Left ventricle myocardium inferior (tissue), 1 donor: ENCODE measurements at regions of chr12 and their contacts with region 1.

Region 1: DNA sequence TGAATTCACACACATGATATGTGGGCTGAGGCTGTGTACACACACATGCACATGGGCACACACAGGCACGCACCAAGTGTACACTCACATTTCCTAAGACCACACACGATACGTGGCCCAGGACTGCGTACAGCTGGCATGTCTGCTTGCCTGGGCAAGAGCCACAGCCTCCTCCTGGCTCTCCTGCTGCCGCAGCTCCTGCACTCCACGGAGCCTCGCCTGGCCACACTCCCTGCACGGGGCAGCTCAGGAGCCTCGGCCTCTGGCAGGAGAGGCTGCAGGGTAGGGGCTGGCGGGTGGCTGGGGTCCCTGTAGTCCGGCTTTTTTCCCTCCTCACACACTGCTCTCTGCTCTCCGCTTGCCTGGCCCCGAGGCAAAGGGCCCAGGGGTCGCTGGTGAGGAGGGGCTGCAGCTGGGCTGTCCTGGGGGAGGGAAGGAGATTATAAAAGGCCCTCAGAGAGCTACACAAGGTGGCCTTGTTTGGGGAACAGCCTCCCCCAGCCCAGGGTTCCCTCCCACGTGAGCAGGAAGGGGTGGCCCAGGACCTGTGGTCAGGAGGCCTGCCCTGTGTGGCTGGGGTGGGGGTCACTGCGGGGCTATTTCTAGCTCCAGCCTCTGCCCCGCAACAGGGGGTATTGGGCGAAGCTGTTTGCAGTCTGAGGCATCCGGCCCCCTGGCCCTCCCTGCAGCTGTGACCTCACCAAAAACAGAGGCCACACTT is 89.0 kb upstream of the SFSWAP start:
- DNase-seq: no peak
- H3K4me3 ChIP-seq: no peak overlapping the region
- H3K27ac ChIP-seq: no peak overlapping the region
- H3K4me1 ChIP-seq: peaks cover 14% of the 10 kb centered on the region
- H3K27me3 ChIP-seq: peaks cover 84% of the 10 kb centered on the region
- CTCF ChIP-seq: no peak

Region 2: DNA sequence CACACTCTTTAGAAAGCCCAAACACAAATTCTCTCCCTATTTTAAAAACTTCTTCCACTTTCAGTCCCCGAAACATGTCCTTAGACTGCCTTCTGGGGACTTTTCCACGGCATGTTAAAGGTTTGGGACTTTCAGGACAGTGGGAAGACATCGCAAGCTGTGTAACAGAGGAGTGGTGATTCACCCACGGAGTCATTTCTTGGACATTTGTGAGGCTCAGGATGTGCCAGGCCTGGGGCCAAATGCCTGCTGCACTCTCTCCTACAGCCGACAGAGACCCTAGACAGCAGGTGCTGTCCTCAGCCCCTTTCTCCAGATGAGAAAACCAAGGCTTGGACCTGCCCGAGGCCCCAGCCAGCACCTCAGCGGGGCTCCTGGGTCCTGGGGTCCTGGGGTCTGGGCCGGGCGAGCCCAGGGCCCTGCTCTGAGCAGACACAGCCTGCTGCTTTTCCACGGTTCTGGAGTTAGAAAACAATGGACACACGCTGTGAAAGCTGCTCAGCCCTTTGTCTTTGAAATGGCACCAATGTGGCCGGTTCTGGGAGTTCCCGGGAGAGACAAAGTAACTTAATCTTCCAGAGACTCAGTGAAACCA is 281.1 kb before region 1 on chr12:
- intact Hi-C with region 1: loop called (anchors 5 kb)
- DNase-seq: no peak
- H3K4me3 ChIP-seq: no peak overlapping the region
- H3K27ac ChIP-seq: no peak overlapping the region
- H3K4me1 ChIP-seq: no peaks in the 10 kb centered on the region
- H3K27me3 ChIP-seq: peaks cover 7% of the 10 kb centered on the region
- CTCF ChIP-seq: no peak

Region 3: GRCh38 chr12:131390384-131391334 is 231.2 kb before region 1 on chr12:
- intact Hi-C with region 1: no loop called
- DNase-seq: no peak
- H3K4me3 ChIP-seq: no peak overlapping the region
- H3K27ac ChIP-seq: no peak overlapping the region
- H3K4me1 ChIP-seq: no peaks in the 10 kb centered on the region
- H3K27me3 ChIP-seq: peaks cover 59% of the 10 kb centered on the region
- CTCF ChIP-seq: no peak

Region 4: DNA sequence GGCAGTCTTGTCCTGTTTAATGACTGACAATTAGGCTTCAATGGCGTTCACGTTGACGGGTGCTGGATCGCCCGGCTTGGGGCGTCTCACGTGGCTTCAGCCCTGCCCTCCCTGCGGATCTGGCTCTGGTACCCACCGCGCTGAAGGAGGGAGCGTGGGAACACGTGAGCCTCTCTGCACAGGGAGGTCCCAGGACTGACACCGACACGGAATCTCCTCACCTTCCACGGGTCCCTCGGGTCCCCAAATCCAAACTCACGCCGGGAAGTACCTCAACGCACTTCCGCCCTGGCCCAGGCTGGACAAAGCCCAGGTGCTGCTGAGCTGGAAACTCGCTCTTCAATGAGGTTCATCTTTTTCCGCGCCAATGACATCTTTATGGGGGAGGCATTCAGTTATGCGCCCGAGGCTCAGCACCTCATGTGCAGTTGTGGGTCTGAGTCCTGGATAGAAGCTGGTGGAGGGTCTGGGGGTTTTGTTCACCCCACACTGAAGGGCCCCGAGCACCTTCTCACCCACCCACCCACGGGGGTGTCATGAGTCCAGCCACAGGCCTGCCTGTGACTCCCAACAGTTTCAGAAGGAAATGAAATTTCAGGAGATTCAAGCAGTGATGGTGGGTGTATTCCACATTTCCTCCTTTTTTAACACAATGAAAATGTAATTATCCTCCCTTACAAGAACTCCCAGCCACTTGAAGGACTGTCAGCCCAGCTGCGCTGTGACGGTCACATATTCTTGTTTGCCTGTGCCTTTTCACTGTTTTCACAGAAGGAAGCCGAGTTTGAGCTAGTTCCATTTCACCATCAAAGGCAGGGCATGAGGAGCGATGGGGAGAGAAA is 162.7 kb before region 1 on chr12:
- intact Hi-C with region 1: no loop called
- DNase-seq: no peak
- H3K4me3 ChIP-seq: no peak overlapping the region
- H3K27ac ChIP-seq: no peak overlapping the region
- H3K4me1 ChIP-seq: no peaks in the 10 kb centered on the region
- H3K27me3 ChIP-seq: peaks cover 91% of the 10 kb centered on the region
- CTCF ChIP-seq: no peak